Naive thymus-derived CD4-positive, alpha-beta T cell (primary cell): ENCODE measurements at regions of chr17 and their contacts with region 1.

Region 1: GRCh38 chr17:75524953-75525719 is at the start of gene LLGL2:
- DNase-seq: peak; percentile 82 to 91 (median 89)
- ATAC-seq: peak; percentile 98
- H3K4me3 ChIP-seq: peak within 1 kb of the TSS; percentile 75
- H3K4me3 Mint-ChIP-seq: peak within 1 kb of the TSS; percentile 76 to 86 (median 82)
- H3K27ac ChIP-seq: peak within 1 kb of the TSS; percentile 67
- H3K27ac Mint-ChIP-seq: peak within 1 kb of the TSS in 7 of 9 donors; percentile 45 to 74 (median 59)
- H3K4me1 ChIP-seq: peaks cover 6 to 7% of the 10 kb centered on the region in 2 donors
- H3K4me1 Mint-ChIP-seq: peaks cover 0 to 20% (median 16%) of the 10 kb centered on the region in 7 donors
- H3K27me3 ChIP-seq: no peaks in the 10 kb centered on the region
- H3K27me3 Mint-ChIP-seq: peaks cover 0 to 11% (median 0%) of the 10 kb centered on the region in 5 donors
- total RNA-seq, gene LLGL2: 22.4 to 55.7 (median 33.7) TPM

Region 2: GRCh38 chr17:75456417-75457046 is 68.6 kb before region 1 on chr17 and contains the start of gene TMEM94:
- CTCF ChIA-PET with region 1: no interaction called
- POLR2A ChIA-PET with region 1: no interaction called
- intact Hi-C with region 1: loop called in 1 of 2 experiments (anchors 1 kb)
- DNase-seq: peak; percentile 70 to 93 (median 89)
- ATAC-seq: peak; percentile 98
- H3K4me3 ChIP-seq: peak within 1 kb of the TSS; percentile 99
- H3K4me3 Mint-ChIP-seq: peak within 1 kb of the TSS; percentile 92 to 99 (median 94)
- H3K27ac ChIP-seq: peak within 1 kb of the TSS; percentile 74
- H3K27ac Mint-ChIP-seq: peak within 1 kb of the TSS; percentile 84 to 99 (median 93)
- H3K4me1 ChIP-seq: peaks cover 10% of the 10 kb centered on the region in 2 donors
- H3K4me1 Mint-ChIP-seq: peaks cover 25 to 42% (median 34%) of the 10 kb centered on the region in 7 donors
- H3K27me3 ChIP-seq: no peaks in the 10 kb centered on the region
- H3K27me3 Mint-ChIP-seq: no peaks in the 10 kb centered on the region
- total RNA-seq, gene TMEM94: 74.1 to 97.2 (median 81.9) TPM

Region 3: GRCh38 chr17:75493476-75494129 is 31.5 kb before region 1 on chr17:
- CTCF ChIA-PET with region 1: no interaction called
- POLR2A ChIA-PET with region 1: no interaction called
- intact Hi-C with region 1: no loop called
- DNase-seq: no peak
- ATAC-seq: no peak
- H3K4me3 ChIP-seq: no peak overlapping the region
- H3K4me3 Mint-ChIP-seq: no peak overlapping the region
- H3K27ac ChIP-seq: no peak overlapping the region
- H3K27ac Mint-ChIP-seq: no peak overlapping the region
- H3K4me1 ChIP-seq: peaks cover 0 to 7% of the 10 kb centered on the region in 2 donors
- H3K4me1 Mint-ChIP-seq: peaks cover 0 to 16% (median 7%) of the 10 kb centered on the region in 7 donors
- H3K27me3 ChIP-seq: no peaks in the 10 kb centered on the region
- H3K27me3 Mint-ChIP-seq: no peaks in the 10 kb centered on the region

Region 4: GRCh38 chr17:75504347-75504964 is 20.7 kb before region 1 on chr17:
- CTCF ChIA-PET with region 1: interaction called, 4 read pairs
- POLR2A ChIA-PET with region 1: interaction called, 3 read pairs
- intact Hi-C with region 1: loop called in 1 of 2 experiments (anchors 1 kb)
- DNase-seq: peak in 4 of 9 donors; percentile 26 to 41 (median 38)
- ATAC-seq: peak; percentile 73
- H3K4me3 ChIP-seq: no peak overlapping the region
- H3K4me3 Mint-ChIP-seq: no peak overlapping the region
- H3K27ac ChIP-seq: no peak overlapping the region
- H3K27ac Mint-ChIP-seq: no peak overlapping the region
- H3K4me1 ChIP-seq: no peaks in the 10 kb centered on the region
- H3K4me1 Mint-ChIP-seq: peaks cover 0 to 2% (median 0%) of the 10 kb centered on the region in 7 donors
- H3K27me3 ChIP-seq: no peaks in the 10 kb centered on the region
- H3K27me3 Mint-ChIP-seq: no peaks in the 10 kb centered on the region

Region 5: GRCh38 chr17:75571197-75571873 is 46.2 kb after region 1 on chr17:
- CTCF ChIA-PET with region 1: no interaction called
- POLR2A ChIA-PET with region 1: no interaction called
- intact Hi-C with region 1: loop called in 1 of 2 experiments (anchors 5 kb)
- DNase-seq: peak in 1 of 9 donors; percentile 38
- ATAC-seq: peak; percentile 92
- H3K4me3 ChIP-seq: no peak overlapping the region
- H3K4me3 Mint-ChIP-seq: peak overlapping the region in 1 of 10 donors; percentile 71
- H3K27ac ChIP-seq: no peak overlapping the region
- H3K27ac Mint-ChIP-seq: peak overlapping the region in 1 of 9 donors; percentile 92
- H3K4me1 ChIP-seq: no peaks in the 10 kb centered on the region
- H3K4me1 Mint-ChIP-seq: peaks cover 0 to 8% (median 0%) of the 10 kb centered on the region in 7 donors
- H3K27me3 ChIP-seq: no peaks in the 10 kb centered on the region
- H3K27me3 Mint-ChIP-seq: no peaks in the 10 kb centered on the region